HEK293T (cell line): ENCODE measurements at regions of chr18 and their contacts with region 1.

Region 1: GRCh38 chr18:26322890-26323653 is 96.8 kb downstream of the TAF4B start:
- DNase-seq: no peak

Region 2: GRCh38 chr18:26546840-26547749 is 224.0 kb after region 1 on chr18:
- CTCF ChIA-PET with region 1: interaction called, 10 read pairs
- POLR2A ChIA-PET with region 1: no interaction called
- DNase-seq: no peak